SK-N-SH (cell line): ENCODE measurements at regions of chr2 and their contacts with region 1.

Region 1: DNA sequence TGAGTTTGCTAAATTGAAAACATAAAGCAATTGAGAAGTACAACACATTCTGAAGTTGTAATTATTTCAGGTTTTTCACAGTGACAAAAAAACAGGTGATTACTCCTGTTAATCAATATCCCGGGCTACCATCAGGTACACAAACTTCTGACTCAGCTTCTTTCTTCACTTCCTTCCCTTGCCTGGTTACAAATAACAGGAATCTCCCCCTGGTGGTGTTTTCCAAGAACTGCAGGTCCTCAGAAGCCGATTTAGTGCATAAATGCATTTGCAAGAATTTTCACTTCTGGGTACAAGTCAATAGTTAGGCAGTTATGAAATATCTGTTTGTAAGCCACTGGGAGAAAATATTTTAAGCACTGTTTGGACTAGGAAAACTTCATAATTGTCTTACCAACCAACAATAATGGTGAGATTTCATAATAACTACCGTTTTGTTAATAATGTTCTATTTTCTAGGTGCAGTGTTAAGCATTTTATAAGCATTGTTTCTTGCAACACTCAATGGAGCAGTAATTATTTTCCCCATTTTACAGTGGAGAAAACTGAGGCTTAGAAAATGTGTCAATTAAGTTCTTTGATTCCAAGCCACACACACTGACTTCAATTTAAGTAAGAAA is 12.4 kb upstream of the GMCL1 start:
- DNase-seq: peak; percentile 39
- H3K4me3 ChIP-seq: no peak overlapping the region; a peak in 1 of 4 replicates
- H3K27ac ChIP-seq: no peak overlapping the region
- H3K4me1 ChIP-seq: peaks cover 0 to 3% of the 10 kb centered on the region in 2 experiments; a peak in 2 of 4 replicates
- H3K27me3 ChIP-seq: no peaks in the 10 kb centered on the region
- CTCF ChIP-seq: peak; percentile 93
- EP300 ChIP-seq: no peak
- RAD21 ChIP-seq: peak; percentile 76

Region 2: DNA sequence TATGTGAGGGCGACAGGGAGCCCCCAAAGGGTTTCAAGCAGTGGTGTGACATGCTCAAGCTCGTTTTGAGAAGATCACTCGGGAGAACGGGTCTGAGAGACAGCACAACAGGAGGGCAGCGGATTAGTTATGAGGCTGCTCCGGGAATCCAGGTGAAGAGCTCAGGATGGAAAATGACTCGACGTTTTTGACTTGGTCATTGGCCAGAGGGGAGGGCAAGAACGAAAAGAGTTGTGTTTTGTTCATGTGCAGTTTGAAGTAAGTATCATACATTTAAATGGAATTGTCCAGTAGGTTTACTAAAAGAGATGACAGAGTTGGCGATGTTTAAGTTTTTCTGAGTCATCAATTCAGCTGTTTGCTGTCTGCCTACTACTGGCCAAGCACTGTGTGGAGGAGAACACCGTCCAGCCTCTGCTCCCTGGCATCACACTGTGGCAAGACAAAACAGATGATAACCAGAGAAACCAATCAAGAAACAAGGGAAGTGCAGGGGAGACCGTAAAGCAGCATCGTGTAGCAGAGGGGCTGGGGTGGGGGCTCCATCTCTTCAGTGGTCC is 100.4 kb before region 1 on chr2:
- CTCF ChIA-PET with region 1: interaction called, 39 read pairs
- POLR2A ChIA-PET with region 1: no interaction called
- DNase-seq: no peak
- H3K4me3 ChIP-seq: no peak overlapping the region
- H3K27ac ChIP-seq: no peak overlapping the region
- H3K4me1 ChIP-seq: peaks cover 0 to 17% of the 10 kb centered on the region in 2 experiments; a peak in 1 of 4 replicates
- H3K27me3 ChIP-seq: no peaks in the 10 kb centered on the region
- CTCF ChIP-seq: peak; percentile 13; the same call in 1 of the 2 replicates
- EP300 ChIP-seq: no peak
- RAD21 ChIP-seq: no peak

Region 3: GRCh38 chr2:69734035-69734631 is 82.9 kb before region 1 on chr2:
- CTCF ChIA-PET with region 1: interaction called, 15 read pairs
- POLR2A ChIA-PET with region 1: no interaction called
- DNase-seq: no peak
- H3K4me3 ChIP-seq: no peak overlapping the region
- H3K27ac ChIP-seq: no peak overlapping the region
- H3K4me1 ChIP-seq: no peaks in the 10 kb centered on the region
- H3K27me3 ChIP-seq: no peaks in the 10 kb centered on the region
- CTCF ChIP-seq: no peak
- EP300 ChIP-seq: no peak
- RAD21 ChIP-seq: no peak

Region 4: GRCh38 chr2:69741619-69742466 is 75.2 kb before region 1 on chr2 and contains the start of gene ANXA4:
- CTCF ChIA-PET with region 1: interaction called, 33 read pairs
- POLR2A ChIA-PET with region 1: no interaction called
- DNase-seq: peak; percentile 88
- H3K4me3 ChIP-seq: peak within 1 kb of the TSS; percentile 69 to 72
- H3K27ac ChIP-seq: peak within 1 kb of the TSS; percentile 80 to 84
- H3K4me1 ChIP-seq: peaks cover 0 to 10% of the 10 kb centered on the region in 2 experiments; a peak in 1 of 4 replicates
- H3K27me3 ChIP-seq: no peaks in the 10 kb centered on the region
- CTCF ChIP-seq: no peak
- EP300 ChIP-seq: no peak
- RAD21 ChIP-seq: no peak
- polyA plus RNA-seq, gene ANXA4: 93.2 and 137 TPM in 2 replicates

Region 5: GRCh38 chr2:69798909-69799526 is 18.0 kb before region 1 on chr2:
- CTCF ChIA-PET with region 1: interaction called, 38 read pairs
- POLR2A ChIA-PET with region 1: no interaction called
- DNase-seq: no peak
- H3K4me3 ChIP-seq: peak overlapping the region in 1 of 2 experiments; percentile 30; a peak in 2 of 4 replicates
- H3K27ac ChIP-seq: peak overlapping the region; percentile 65 to 66
- H3K4me1 ChIP-seq: peaks cover 14 to 17% of the 10 kb centered on the region in 2 experiments; a peak in 3 of 4 replicates
- H3K27me3 ChIP-seq: no peaks in the 10 kb centered on the region
- CTCF ChIP-seq: no peak
- EP300 ChIP-seq: no peak
- RAD21 ChIP-seq: no peak

Region 6: GRCh38 chr2:69804416-69804815 is 12.6 kb before region 1 on chr2:
- CTCF ChIA-PET with region 1: interaction called, 38 read pairs
- POLR2A ChIA-PET with region 1: no interaction called
- DNase-seq: no peak
- H3K4me3 ChIP-seq: no peak overlapping the region
- H3K27ac ChIP-seq: no peak overlapping the region
- H3K4me1 ChIP-seq: peaks cover 0 to 6% of the 10 kb centered on the region in 2 experiments; a peak in 1 of 4 replicates
- H3K27me3 ChIP-seq: no peaks in the 10 kb centered on the region
- CTCF ChIP-seq: no peak
- EP300 ChIP-seq: no peak
- RAD21 ChIP-seq: no peak

Region 7: DNA sequence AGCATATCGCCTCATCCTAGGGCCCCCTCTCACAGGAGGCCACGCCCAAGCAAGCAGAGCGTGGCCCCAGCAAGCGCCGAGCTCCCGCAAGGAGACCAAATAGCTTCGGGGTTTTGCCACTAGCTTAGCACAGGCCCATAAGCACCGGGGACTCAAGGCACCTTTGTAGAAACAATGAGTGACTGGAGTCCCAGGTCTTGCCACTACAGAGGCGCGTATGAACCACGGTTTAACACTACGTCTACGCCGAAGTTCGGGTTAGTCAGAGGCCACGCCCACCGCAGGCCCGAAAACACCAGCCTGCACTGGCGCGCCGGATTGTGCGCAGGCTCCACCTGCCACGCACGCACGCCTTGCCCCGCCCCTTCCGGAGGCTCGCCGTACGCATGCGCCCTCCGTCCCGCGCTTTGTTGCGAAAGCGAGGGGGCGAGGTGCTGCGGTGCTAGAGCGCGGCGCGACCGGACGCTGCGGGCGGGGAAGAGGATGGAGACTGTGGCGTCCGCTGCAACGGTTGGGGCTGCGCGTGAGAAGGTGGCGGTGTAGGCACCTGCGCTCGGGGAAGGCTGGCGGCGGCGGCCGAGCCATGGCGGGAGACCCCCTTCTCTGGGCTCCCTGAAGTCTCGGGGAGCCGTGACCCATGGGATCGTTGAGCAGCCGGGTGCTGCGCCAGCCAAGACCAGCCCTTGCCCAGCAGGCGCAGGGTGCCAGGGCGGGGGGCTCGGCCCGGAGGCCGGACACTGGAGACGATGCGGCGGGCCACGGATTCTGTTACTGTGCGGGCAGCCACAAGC is 12.4 kb after region 1 on chr2 and contains the start of gene GMCL1:
- CTCF ChIA-PET with region 1: interaction called, 38 read pairs
- POLR2A ChIA-PET with region 1: no interaction called
- DNase-seq: peak; percentile 94
- H3K4me3 ChIP-seq: peak within 1 kb of the TSS; percentile 82 to 95
- H3K27ac ChIP-seq: peak within 1 kb of the TSS; percentile 87 to 95
- H3K4me1 ChIP-seq: peaks cover 10 to 11% of the 10 kb centered on the region in 2 experiments
- H3K27me3 ChIP-seq: no peaks in the 10 kb centered on the region
- CTCF ChIP-seq: no peak
- EP300 ChIP-seq: no peak
- RAD21 ChIP-seq: no peak
- polyA plus RNA-seq, gene GMCL1: 5.3 and 6.2 TPM in 2 replicates